ENCODE measurements at regions of chr14 and their contacts with region 1.

Region 1: DNA sequence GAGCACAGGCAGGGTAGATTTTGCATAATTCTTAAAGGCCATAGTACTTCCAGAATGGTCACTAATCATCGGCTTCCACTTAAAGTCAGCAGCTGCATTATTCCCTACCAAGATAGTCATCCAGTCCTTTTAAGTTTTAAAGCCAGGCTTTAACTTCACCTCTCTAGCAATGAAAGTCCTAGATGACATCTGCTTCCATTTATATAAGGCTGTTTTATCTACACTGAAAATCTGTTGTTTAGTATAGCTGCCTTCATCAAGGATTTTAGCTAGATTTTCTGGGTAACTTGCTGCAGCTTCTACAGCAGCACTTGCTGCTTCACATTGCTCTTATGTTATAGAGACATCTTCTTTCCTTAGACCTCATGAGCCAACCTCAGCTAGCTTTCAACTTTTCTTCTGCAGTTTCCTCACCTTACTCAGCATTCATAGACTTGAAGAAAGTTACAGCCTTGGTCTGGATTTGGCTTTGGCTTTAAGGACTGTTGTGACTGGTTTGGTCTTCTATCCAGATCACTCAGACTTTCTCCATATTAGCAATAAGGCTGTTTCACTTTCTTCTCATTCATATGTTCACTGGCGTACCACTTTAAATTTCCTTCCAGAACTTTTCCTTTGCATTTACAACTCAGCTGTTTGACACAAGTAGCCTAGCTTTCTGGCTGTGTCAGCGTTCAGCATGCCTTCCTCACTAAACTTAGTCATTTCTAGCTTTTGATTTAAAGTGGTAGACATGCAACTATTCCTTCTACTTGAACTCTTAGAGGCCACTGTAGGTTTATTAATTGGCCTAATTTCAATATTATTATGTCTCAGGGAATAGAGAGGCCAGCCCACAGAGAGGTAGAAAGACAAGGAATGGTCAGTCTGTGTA is 209.9 kb upstream of the GARIN2 start:
- DNase-seq: peak; percentile 13
- H3K4me3 Mint-ChIP-seq: no peak overlapping the region
- H3K27ac Mint-ChIP-seq: no peak overlapping the region
- H3K4me1 Mint-ChIP-seq: peaks cover 5% of the 10 kb centered on the region
- H3K27me3 Mint-ChIP-seq: no peaks in the 10 kb centered on the region

Region 2: DNA sequence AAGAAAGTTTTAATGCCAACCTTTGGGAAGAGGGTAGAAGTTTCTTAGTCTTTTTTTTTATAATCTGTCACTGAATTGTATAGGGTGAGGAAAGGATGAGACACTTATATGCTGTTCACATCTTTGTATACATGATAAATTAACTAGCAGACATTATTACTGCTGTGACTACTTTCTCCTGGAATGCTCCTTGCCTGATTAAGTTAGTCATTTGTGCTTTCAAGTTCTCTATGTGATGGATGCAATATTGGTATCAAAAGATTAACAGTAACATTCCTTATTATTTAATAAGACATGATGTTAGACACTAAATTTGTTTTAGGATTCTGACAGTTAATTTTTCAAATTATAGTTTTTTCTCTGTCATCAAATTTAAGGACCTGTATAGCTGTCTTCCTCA is 13.5 kb before region 1 on chr14:
- CTCF ChIA-PET with region 1: no interaction called
- POLR2A ChIA-PET with region 1: no interaction called
- intact Hi-C with region 1: no loop called
- DNase-seq: no peak
- H3K4me3 Mint-ChIP-seq: no peak overlapping the region
- H3K27ac Mint-ChIP-seq: no peak overlapping the region
- H3K4me1 Mint-ChIP-seq: no peaks in the 10 kb centered on the region
- H3K27me3 Mint-ChIP-seq: no peaks in the 10 kb centered on the region

Region 3: GRCh38 chr14:66998013-66998412 is 18.7 kb after region 1 on chr14:
- CTCF ChIA-PET with region 1: no interaction called
- POLR2A ChIA-PET with region 1: no interaction called
- intact Hi-C with region 1: loop called (anchors 1 kb)
- DNase-seq: peak; percentile 37
- H3K4me3 Mint-ChIP-seq: no peak overlapping the region
- H3K27ac Mint-ChIP-seq: no peak overlapping the region
- H3K4me1 Mint-ChIP-seq: peaks cover 10% of the 10 kb centered on the region
- H3K27me3 Mint-ChIP-seq: no peaks in the 10 kb centered on the region